ENCODE measurements at regions of chr22 and their contacts with region 1.

Region 1: GRCh38 chr22:27804470-27805297 is 3.1 kb upstream of the MN1 start:
- DNase-seq: peak; percentile 49 to 82 (median 70)
- ATAC-seq: peak; percentile 42 to 65 (median 62)
- H3K4me3 ChIP-seq: no peak overlapping the region
- H3K27ac ChIP-seq: no peak overlapping the region
- H3K4me1 ChIP-seq: peaks cover 0 to 10% (median 0%) of the 10 kb centered on the region in 3 donors
- H3K27me3 ChIP-seq: no peaks in the 10 kb centered on the region
- CTCF ChIP-seq: peak; percentile 31 to 59 (median 51)

Region 2: GRCh38 chr22:26681395-26681821 is 1123.3 kb before region 1 on chr22:
- intact Hi-C with region 1: loop called in 1 of 3 experiments (anchors 10 kb)
- DNase-seq: no peak
- ATAC-seq: no peak
- H3K4me3 ChIP-seq: no peak overlapping the region
- H3K27ac ChIP-seq: no peak overlapping the region
- H3K4me1 ChIP-seq: no peaks in the 10 kb centered on the region
- H3K27me3 ChIP-seq: no peaks in the 10 kb centered on the region
- CTCF ChIP-seq: no peak

Region 3: GRCh38 chr22:26756675-26757293 is 1047.9 kb before region 1 on chr22:
- intact Hi-C with region 1: loop called in 1 of 3 experiments (anchors 10 kb)
- DNase-seq: peak; percentile 20 to 88 (median 46)
- ATAC-seq: peak; percentile 75 to 93 (median 86)
- H3K4me3 ChIP-seq: peak overlapping the region in 1 of 4 donors; percentile 30
- H3K27ac ChIP-seq: no peak overlapping the region
- H3K4me1 ChIP-seq: no peaks in the 10 kb centered on the region
- H3K27me3 ChIP-seq: no peaks in the 10 kb centered on the region
- CTCF ChIP-seq: peak; percentile 66 to 89 (median 78)